ENCODE measurements at regions of chr16 and their contacts with region 1.

Region 1: DNA sequence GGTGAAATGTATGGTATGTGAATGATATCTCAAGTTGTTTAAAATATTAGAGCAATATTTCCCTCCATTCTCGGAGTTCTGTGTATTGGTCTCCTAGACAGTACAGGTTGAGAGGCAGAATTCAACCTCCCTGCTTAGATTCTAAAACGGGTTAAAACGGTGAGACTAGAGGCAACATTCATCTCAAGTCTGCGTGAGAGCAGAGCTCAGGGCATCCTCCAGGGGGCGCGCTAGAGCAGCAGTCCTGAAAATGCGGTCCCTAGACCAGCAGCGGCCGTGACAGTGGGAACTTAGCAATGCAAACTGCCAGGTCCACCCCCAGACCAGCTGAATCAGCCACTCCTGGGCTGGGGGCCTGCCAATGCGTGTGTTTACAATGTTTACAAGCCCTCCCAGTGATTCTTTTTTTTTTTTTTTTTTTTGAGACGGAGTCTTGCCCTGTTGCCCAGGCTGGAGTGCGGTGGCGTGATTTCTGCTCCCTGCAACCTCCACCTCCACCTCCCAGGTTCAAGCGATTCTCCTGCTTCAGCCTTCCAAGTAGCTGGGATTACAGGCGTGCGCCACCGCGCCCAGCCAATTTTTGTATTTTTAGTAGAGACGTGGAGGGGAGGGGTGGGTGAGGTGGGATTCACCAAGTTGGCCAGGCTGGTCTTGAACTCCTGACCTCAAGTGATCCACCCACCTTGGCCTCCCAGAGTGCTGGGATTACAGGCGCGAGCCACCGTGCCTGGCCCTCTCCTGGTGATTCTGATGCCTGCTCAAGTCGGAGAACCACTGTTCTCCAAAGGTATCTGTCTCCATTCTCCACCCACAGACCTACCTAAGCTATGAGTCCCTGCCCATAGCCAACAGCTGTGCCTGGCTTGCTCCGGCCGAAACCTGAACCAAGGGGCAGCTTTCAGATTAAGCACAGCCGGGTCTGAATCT is 24.2 kb downstream of the KLHL36 start:
- DNase-seq: peak; percentile 73
- H3K4me3 Mint-ChIP-seq: no peak overlapping the region
- H3K27ac Mint-ChIP-seq: no peak overlapping the region
- H3K4me1 Mint-ChIP-seq: peaks cover 17% of the 10 kb centered on the region
- H3K27me3 Mint-ChIP-seq: no peaks in the 10 kb centered on the region
- CTCF ChIP-seq: peak; percentile 89

Region 2: DNA sequence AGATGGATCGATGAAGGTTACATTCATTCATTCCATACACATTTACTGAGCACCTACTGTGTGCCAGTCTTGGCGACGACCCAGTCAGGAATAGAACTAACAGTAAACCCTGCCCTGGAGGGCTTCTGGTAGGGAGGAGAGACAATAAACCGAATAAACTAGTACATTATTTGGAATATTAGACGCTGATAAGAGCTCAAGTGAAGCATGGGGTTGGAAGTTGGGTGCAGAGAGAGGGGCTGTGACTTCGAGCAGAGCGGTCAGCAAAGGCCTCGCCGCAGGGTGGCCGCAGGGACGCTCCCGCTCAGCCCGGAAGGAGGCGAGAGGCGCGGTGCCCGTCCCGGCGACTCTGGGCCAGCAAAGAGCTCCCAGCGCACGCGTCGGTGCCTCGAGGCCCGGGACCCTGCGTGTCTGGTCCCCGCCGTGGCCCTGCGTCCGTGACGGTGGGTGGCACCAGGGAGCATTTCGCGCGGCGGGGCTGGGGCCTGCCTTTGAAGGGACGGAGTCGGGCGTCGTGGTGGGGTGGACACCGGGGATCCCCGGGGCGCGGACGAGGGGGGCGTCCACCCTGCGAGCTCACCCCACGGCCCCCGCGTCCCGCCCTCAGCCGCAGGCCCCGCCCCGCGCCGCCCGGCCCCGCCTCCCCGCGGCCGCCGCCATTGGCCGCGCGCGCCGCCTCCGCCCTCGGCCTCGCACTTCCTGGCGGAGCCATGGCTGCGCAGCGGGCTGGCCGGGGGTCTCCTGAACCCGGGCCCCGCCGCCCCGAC is 24.5 kb before region 1 on chr16 and contains the start of gene KLHL36:
- CTCF ChIA-PET with region 1: interaction called, 10 read pairs
- POLR2A ChIA-PET with region 1: interaction called, 7 read pairs
- intact Hi-C with region 1: no loop called
- DNase-seq: peak; percentile 23
- H3K4me3 Mint-ChIP-seq: peak within 1 kb of the TSS; percentile 86
- H3K27ac Mint-ChIP-seq: peak within 1 kb of the TSS; percentile 66
- H3K4me1 Mint-ChIP-seq: peaks cover 24% of the 10 kb centered on the region
- H3K27me3 Mint-ChIP-seq: no peaks in the 10 kb centered on the region
- CTCF ChIP-seq: no peak
- total RNA-seq, gene KLHL36: 38.4 and 41.9 TPM in 2 replicates

Region 3: GRCh38 chr16:84720177-84720579 is 47.6 kb after region 1 on chr16:
- CTCF ChIA-PET with region 1: interaction called, 64 read pairs
- POLR2A ChIA-PET with region 1: interaction called, 18 read pairs
- intact Hi-C with region 1: no loop called
- DNase-seq: no peak
- H3K4me3 Mint-ChIP-seq: no peak overlapping the region
- H3K27ac Mint-ChIP-seq: peak overlapping the region; percentile 16
- H3K4me1 Mint-ChIP-seq: peaks cover 34% of the 10 kb centered on the region
- H3K27me3 Mint-ChIP-seq: no peaks in the 10 kb centered on the region
- CTCF ChIP-seq: no peak

Measured in MCF 10A (cell line).